Activated CD4-positive, alpha-beta T cell treated with anti-CD3 and anti-CD28 coated beads, Interleukin-2, amount 10 ng/mL, durations not matched to agents 7 days and 5 days (primary cell): ENCODE measurements at regions of chr6 and their contacts with region 1.

Region 1: GRCh38 chr6:27871924-27872638 is 40.1 kb downstream of the OR2B2 start:
- DNase-seq: peak; percentile 94
- H3K4me3 Mint-ChIP-seq: peak overlapping the region; percentile 92
- H3K27ac Mint-ChIP-seq: peak overlapping the region; percentile 99
- H3K4me1 Mint-ChIP-seq: peaks cover 65% of the 10 kb centered on the region
- H3K27me3 Mint-ChIP-seq: no peaks in the 10 kb centered on the region

Region 2: GRCh38 chr6:27132532-27133280 is 739.4 kb before region 1 on chr6:
- CTCF ChIA-PET with region 1: interaction called, 4 read pairs
- POLR2A ChIA-PET with region 1: interaction called, 19 read pairs
- DNase-seq: peak; percentile 94
- H3K4me3 Mint-ChIP-seq: no peak overlapping the region
- H3K27ac Mint-ChIP-seq: no peak overlapping the region
- H3K4me1 Mint-ChIP-seq: peaks cover 66% of the 10 kb centered on the region
- H3K27me3 Mint-ChIP-seq: no peaks in the 10 kb centered on the region

Region 3: DNA sequence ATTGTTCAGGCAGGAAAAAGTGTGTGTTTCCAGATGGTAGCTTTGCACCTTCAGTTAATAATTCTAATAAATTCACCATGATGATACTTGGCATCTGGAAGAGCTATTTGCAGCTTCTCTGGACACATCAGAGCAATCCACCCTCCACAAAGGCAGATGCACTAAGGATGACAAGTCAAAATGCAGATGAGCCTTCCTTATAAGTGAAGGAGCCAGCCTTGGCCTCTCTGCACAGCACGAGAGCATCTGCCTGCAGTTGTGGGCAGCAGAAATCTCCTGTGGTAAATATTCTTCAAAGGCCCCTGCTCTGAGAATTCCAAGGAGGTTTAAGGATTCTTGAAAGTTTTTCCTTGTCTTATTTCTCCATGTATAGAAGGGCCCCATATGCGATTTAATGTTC is 553.1 kb before region 1 on chr6:
- CTCF ChIA-PET with region 1: no interaction called
- POLR2A ChIA-PET with region 1: no interaction called
- DNase-seq: no peak
- H3K4me3 Mint-ChIP-seq: no peak overlapping the region
- H3K27ac Mint-ChIP-seq: no peak overlapping the region
- H3K4me1 Mint-ChIP-seq: no peaks in the 10 kb centered on the region
- H3K27me3 Mint-ChIP-seq: peaks cover 56% of the 10 kb centered on the region

Region 4: DNA sequence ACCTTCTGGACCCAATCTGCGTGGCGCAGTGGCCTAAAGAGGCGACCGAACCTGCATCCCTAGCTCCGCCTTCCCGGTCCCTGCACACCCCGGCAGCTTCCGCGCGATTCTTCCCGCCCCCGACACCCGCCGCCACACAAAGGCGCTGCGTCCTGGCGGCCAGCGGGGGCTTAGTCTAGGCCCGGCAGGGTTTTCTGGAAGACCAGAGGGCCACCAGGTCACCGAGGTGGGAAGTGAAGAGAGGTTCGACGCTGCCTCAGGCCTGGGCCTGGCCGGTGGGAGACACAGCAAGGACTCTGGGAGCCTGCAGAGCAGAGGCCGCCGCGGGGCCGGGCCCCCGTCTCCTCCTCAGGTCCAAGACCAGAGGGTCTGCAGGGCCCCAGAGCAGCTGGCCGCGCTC is 114.8 kb before region 1 on chr6:
- CTCF ChIA-PET with region 1: no interaction called
- POLR2A ChIA-PET with region 1: no interaction called
- DNase-seq: peak; percentile 57
- H3K4me3 Mint-ChIP-seq: peak overlapping the region; percentile 87
- H3K27ac Mint-ChIP-seq: peak overlapping the region; percentile 89
- H3K4me1 Mint-ChIP-seq: peaks cover 64% of the 10 kb centered on the region
- H3K27me3 Mint-ChIP-seq: no peaks in the 10 kb centered on the region

Region 5: DNA sequence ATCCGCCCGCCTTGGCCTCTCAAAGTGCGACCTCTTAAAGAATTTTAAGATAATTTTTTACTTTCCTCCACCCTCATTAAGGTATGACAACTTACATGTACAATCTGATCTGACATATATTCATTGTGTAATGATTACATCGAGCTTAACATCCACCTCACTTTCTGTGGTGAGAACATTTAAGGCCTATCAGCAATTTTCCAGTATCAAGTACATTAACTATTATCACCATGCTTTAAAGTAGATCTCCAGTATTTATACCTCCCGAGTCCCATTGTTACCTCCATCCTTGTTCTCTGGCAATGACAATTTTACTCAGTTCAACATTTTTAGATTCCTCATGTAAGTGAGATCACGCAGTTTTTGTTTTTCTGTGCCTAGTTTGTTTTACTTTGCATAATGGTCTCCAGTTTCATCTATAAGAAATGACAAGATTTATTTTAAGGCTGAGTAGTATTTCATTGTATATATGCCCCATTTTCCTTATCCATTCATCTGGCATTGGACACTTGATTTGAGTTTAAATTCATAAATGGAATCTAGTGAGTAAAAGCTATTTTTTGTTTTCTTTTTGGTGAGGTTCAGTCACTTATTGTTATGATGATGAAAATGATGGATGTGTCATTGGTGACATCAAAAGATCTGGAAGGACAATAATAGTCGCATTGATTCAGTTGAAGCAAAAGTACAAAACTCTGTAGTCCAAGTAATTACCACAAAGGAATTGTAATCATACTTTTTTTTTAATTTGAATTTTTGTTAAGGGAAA is 46.9 kb before region 1 on chr6:
- CTCF ChIA-PET with region 1: interaction called, 8 read pairs
- POLR2A ChIA-PET with region 1: interaction called, 553 read pairs
- DNase-seq: no peak
- H3K4me3 Mint-ChIP-seq: peak overlapping the region; percentile 89
- H3K27ac Mint-ChIP-seq: peak overlapping the region; percentile 99
- H3K4me1 Mint-ChIP-seq: peaks cover 48% of the 10 kb centered on the region
- H3K27me3 Mint-ChIP-seq: no peaks in the 10 kb centered on the region

Region 6: DNA sequence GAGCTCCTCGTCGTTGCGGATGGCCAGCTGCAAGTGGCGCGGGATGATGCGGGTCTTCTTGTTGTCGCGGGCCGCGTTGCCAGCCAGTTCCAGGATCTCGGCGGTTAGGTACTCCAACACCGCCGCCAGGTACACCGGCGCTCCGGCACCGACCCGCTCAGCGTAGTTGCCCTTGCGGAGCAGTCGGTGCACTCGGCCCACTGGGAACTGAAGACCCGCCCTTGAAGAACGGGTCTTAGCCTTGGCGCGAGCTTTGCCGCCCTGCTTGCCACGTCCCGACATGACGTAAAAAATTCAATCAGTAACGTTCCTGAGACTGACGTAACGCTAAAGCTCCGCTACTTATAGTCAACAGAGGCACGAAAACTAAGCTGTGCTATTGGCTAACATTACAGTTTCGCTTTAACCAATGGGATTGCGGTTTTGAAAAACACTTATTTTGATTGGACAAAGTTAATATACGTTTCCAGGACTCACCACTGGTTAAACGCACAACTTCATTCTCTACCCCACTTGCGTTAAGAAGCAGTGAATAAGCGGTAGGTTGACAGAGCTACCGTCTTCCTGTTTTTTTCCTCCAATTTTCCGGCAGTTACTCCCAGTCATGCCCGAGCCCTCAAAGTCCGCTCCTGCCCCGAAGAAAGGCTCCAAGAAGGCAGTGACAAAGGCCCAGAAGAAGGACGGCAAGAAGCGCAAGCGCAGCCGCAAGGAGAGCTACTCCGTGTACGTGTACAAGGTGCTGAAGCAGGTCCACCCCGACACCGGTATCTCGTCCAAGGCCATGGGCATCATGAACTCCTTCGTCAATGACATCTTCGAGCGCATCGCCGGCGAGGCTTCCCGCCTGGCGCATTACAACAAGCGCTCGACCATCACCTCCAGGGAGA is 33.8 kb before region 1 on chr6:
- CTCF ChIA-PET with region 1: interaction called, 45 read pairs
- POLR2A ChIA-PET with region 1: interaction called, 553 read pairs
- DNase-seq: peak; percentile 92
- H3K4me3 Mint-ChIP-seq: no peak overlapping the region
- H3K27ac Mint-ChIP-seq: no peak overlapping the region
- H3K4me1 Mint-ChIP-seq: peaks cover 31% of the 10 kb centered on the region
- H3K27me3 Mint-ChIP-seq: no peaks in the 10 kb centered on the region

Region 7: DNA sequence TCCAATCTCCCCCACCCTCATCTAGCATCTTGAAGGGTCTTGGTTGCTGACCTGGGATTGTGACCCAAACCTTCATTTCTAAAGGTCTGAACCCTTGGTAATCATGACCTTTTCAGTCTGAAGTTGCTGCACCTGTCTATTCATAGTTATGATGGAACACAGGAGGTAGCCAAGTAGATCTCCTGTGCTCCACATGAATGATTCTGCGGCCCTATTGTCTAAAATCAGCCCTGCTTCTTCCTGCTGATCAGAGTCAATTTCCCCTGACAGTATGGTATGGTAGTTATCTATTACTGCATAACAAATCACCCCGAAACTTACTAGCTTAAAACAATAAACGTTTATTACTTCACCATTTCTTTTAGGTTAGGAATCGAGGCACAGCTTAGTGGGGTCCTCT is 94.0 kb after region 1 on chr6:
- CTCF ChIA-PET with region 1: no interaction called
- POLR2A ChIA-PET with region 1: no interaction called
- DNase-seq: no peak
- H3K4me3 Mint-ChIP-seq: no peak overlapping the region
- H3K27ac Mint-ChIP-seq: no peak overlapping the region
- H3K4me1 Mint-ChIP-seq: no peaks in the 10 kb centered on the region
- H3K27me3 Mint-ChIP-seq: peaks cover 26% of the 10 kb centered on the region